Naive thymus-derived CD4-positive, alpha-beta T cell (primary cell): ENCODE measurements at regions of chr2 and their contacts with region 1.

Region 1: GRCh38 chr2:168336864-168337263 is 89.5 kb upstream of the STK39 start:
- DNase-seq: peak in 8 of 9 donors; percentile 11 to 58 (median 48)
- ATAC-seq: peak; percentile 93
- H3K4me3 ChIP-seq: no peak overlapping the region
- H3K4me3 Mint-ChIP-seq: peak overlapping the region in 1 of 10 donors; percentile 5
- H3K27ac ChIP-seq: no peak overlapping the region
- H3K27ac Mint-ChIP-seq: no peak overlapping the region
- H3K4me1 ChIP-seq: no peaks in the 10 kb centered on the region
- H3K4me1 Mint-ChIP-seq: peaks cover 0 to 4% (median 0%) of the 10 kb centered on the region in 7 donors
- H3K27me3 ChIP-seq: no peaks in the 10 kb centered on the region
- H3K27me3 Mint-ChIP-seq: peaks cover 0 to 10% (median 0%) of the 10 kb centered on the region in 5 donors

Region 2: GRCh38 chr2:166539340-166540162 is 1797.3 kb before region 1 on chr2:
- CTCF ChIA-PET with region 1: interaction called, 3 read pairs
- POLR2A ChIA-PET with region 1: no interaction called
- intact Hi-C with region 1: loop called in 1 of 2 experiments (anchors 5 kb)
- DNase-seq: peak in 7 of 9 donors; percentile 19 to 54 (median 43)
- ATAC-seq: peak; percentile 66
- H3K4me3 ChIP-seq: no peak overlapping the region
- H3K4me3 Mint-ChIP-seq: no peak overlapping the region
- H3K27ac ChIP-seq: no peak overlapping the region
- H3K27ac Mint-ChIP-seq: no peak overlapping the region
- H3K4me1 ChIP-seq: no peaks in the 10 kb centered on the region
- H3K4me1 Mint-ChIP-seq: peaks cover 0 to 1% (median 0%) of the 10 kb centered on the region in 7 donors
- H3K27me3 ChIP-seq: no peaks in the 10 kb centered on the region
- H3K27me3 Mint-ChIP-seq: peaks cover 0 to 18% (median 5%) of the 10 kb centered on the region in 5 donors

Region 3: GRCh38 chr2:168160897-168161296 is 176.0 kb before region 1 on chr2:
- CTCF ChIA-PET with region 1: interaction called, 15 read pairs
- POLR2A ChIA-PET with region 1: no interaction called
- intact Hi-C with region 1: loop called (anchors 1 to 2 kb)
- DNase-seq: peak in 3 of 9 donors; percentile 8 to 25 (median 16)
- ATAC-seq: no peak
- H3K4me3 ChIP-seq: no peak overlapping the region
- H3K4me3 Mint-ChIP-seq: no peak overlapping the region
- H3K27ac ChIP-seq: no peak overlapping the region
- H3K27ac Mint-ChIP-seq: no peak overlapping the region
- H3K4me1 ChIP-seq: no peaks in the 10 kb centered on the region
- H3K4me1 Mint-ChIP-seq: peaks cover 7 to 39% (median 22%) of the 10 kb centered on the region in 7 donors
- H3K27me3 ChIP-seq: no peaks in the 10 kb centered on the region
- H3K27me3 Mint-ChIP-seq: no peaks in the 10 kb centered on the region

Region 4: DNA sequence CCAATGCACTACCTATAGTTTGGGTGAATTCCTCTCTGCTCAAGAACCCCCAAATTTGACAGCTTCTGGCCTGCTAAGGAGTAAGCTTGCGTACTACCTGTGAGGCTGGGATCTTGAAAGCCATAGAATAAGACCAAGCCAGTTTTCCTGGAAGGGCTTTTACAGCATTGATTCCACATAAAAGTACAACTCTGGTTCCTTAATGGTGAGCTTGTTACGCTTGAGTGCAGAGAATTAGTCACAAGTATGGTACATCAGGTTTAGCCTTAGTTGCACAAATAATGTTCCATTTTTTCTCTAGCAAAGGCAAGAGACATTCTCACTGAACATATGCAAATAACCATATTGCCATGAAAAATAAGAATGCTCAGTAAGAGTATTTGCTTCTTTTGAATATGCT is 50.3 kb before region 1 on chr2:
- CTCF ChIA-PET with region 1: no interaction called
- POLR2A ChIA-PET with region 1: no interaction called
- intact Hi-C with region 1: loop called in 1 of 2 experiments (anchors 2 kb)
- DNase-seq: no peak
- ATAC-seq: no peak
- H3K4me3 ChIP-seq: no peak overlapping the region
- H3K4me3 Mint-ChIP-seq: no peak overlapping the region
- H3K27ac ChIP-seq: no peak overlapping the region
- H3K27ac Mint-ChIP-seq: no peak overlapping the region
- H3K4me1 ChIP-seq: no peaks in the 10 kb centered on the region
- H3K4me1 Mint-ChIP-seq: no peaks in the 10 kb centered on the region
- H3K27me3 ChIP-seq: no peaks in the 10 kb centered on the region
- H3K27me3 Mint-ChIP-seq: peaks cover 0 to 6% (median 0%) of the 10 kb centered on the region in 5 donors